Mammary epithelial cell (primary cell): ENCODE measurements at regions of chr14 and their contacts with region 1.

Region 1: DNA sequence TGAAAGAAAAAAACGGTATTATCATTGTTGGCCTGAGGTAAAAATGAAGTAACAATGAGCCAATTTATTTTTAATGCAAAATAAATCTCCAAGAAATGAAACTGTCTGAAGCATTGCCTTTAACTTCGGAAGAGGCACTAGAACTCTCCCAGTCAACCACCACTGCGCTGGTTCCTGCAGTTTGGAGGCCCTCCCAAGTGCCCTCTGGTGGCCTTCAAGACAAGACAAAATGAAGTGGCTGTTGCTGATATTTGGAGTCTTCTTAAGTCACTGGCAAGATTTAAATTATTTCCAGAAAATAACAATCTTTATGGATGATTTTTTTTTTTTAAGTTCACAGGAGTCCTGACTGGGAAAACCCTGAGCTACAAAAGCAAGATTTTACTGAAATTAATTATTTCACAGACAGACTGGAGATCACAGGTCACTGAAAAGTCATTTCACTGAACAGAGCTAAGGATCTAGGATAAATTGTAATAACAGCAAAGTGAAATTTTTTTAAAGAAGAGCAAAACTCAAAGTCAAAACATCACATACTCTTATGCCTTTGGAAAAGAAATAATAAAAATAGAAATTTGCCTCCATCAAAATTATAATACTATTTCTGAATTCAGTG is 58.2 kb downstream of the DICER1 start:
- DNase-seq: peak; percentile 49
- H3K4me3 ChIP-seq: no peak overlapping the region
- H3K27ac ChIP-seq: no peak overlapping the region
- H3K4me1 ChIP-seq: no peaks in the 10 kb centered on the region
- H3K27me3 ChIP-seq: no peaks in the 10 kb centered on the region
- CTCF ChIP-seq: peak; percentile 70 to 89

Region 2: DNA sequence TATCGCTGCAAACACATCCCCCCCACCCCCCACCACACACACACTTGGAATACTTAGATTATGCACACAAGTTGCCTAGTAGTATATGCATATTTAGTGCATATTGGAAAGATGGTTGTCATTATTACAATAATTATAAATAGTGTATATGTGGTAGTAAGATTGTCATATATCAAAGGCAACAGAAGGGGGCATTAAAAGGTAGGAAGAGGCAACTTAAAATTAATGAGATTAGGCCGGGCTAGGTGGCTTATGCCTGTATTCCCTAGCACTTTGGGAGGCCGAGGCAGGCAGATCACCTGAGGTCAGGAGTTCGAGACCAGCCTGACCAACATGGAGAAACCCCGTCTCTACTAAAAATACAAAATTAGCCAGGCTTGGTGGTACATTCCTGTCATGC is 381.3 kb before region 1 on chr14:
- CTCF ChIA-PET with region 1: no interaction called
- dilution Hi-C with region 1: no loop called
- in situ Hi-C with region 1: no loop called
- intact Hi-C with region 1: loop called (anchors 1 kb)
- DNase-seq: no peak
- H3K4me3 ChIP-seq: no peak overlapping the region
- H3K27ac ChIP-seq: no peak overlapping the region
- H3K4me1 ChIP-seq: no peaks in the 10 kb centered on the region
- H3K27me3 ChIP-seq: peaks cover 9% of the 10 kb centered on the region
- CTCF ChIP-seq: peak in 1 of 2 donors; percentile 3

Region 3: DNA sequence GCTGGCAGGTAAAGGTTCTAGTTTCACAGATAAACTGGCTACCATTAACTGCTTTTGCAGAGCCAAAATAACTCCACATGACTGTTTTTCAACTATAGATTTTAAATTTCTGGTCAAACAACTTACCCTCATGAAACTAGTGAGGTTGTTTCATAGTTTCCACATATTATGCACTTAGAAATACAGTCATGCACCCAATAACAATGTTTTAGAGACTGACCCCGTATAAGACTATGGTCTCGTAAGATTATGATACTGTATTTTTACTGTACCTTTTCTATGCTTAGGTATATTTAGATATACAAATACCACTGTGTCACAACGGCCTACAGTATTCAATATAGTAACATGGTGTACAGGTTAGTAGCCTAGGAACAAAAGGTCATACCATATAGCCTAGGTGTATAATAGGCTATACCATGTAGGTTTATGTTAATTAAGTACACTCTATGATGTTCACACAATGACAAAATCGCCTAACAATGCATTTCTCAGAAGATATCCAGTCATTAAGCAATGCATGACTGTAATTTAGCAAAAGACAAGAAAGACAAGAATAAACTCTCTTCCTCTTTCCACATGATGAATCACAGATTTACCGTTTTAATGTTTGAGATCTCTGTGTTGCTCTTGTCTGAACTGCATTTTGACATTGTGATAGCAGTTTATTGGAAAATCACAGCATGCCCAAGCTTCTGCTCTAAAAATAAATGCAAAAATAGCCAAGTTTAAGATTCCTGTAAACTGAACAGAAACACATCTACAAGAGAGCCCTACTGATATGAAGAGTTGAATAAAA is 41.2 kb after region 1 on chr14:
- CTCF ChIA-PET with region 1: no interaction called
- dilution Hi-C with region 1: no loop called
- in situ Hi-C with region 1: no loop called
- intact Hi-C with region 1: no loop called
- DNase-seq: peak; percentile 73
- H3K4me3 ChIP-seq: no peak overlapping the region
- H3K27ac ChIP-seq: peak overlapping the region; percentile 49
- H3K4me1 ChIP-seq: peaks cover 10% of the 10 kb centered on the region
- H3K27me3 ChIP-seq: no peaks in the 10 kb centered on the region
- CTCF ChIP-seq: no peak

Region 4: DNA sequence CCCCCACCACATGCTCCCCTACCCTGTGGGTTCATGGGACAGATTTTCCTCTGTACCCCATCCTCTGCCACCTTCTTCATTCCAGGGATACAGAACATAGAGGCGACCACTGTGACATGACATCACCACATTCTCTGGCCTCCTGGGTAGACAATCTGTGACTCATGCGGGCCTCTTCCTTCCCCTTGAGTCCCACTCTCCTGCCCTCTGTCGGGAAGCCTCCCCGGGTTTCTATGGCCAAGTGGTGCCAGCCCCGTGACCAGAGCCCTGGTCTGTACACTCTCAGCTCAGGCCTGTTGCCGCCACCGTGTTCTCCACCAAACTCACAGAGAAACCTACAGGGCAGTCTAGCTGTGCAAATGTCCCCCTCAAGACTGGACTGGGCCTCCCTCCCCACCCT is 212.7 kb after region 1 on chr14:
- CTCF ChIA-PET with region 1: no interaction called
- dilution Hi-C with region 1: no loop called
- in situ Hi-C with region 1: no loop called
- intact Hi-C with region 1: no loop called
- DNase-seq: no peak
- H3K4me3 ChIP-seq: no peak overlapping the region
- H3K27ac ChIP-seq: no peak overlapping the region
- H3K4me1 ChIP-seq: peaks cover 32% of the 10 kb centered on the region
- H3K27me3 ChIP-seq: no peaks in the 10 kb centered on the region
- CTCF ChIP-seq: no peak